ENCODE measurements at regions of chr4 and their contacts with region 1.

Region 1: GRCh38 chr4:158805619-158806471 is 37.0 kb downstream of the FNIP2 start:
- DNase-seq: no peak
- H3K4me3 Mint-ChIP-seq: no peak overlapping the region
- H3K27ac Mint-ChIP-seq: no peak overlapping the region
- H3K4me1 Mint-ChIP-seq: peaks cover 18% of the 10 kb centered on the region
- H3K27me3 Mint-ChIP-seq: no peaks in the 10 kb centered on the region
- CTCF ChIP-seq: no peak

Region 2: GRCh38 chr4:158738866-158739265 is 67.0 kb before region 1 on chr4:
- CTCF ChIA-PET with region 1: no interaction called
- POLR2A ChIA-PET with region 1: no interaction called
- intact Hi-C with region 1: no loop called
- DNase-seq: no peak
- H3K4me3 Mint-ChIP-seq: no peak overlapping the region
- H3K27ac Mint-ChIP-seq: no peak overlapping the region
- H3K4me1 Mint-ChIP-seq: no peaks in the 10 kb centered on the region
- H3K27me3 Mint-ChIP-seq: no peaks in the 10 kb centered on the region
- CTCF ChIP-seq: no peak

Region 3: GRCh38 chr4:158768555-158769174 is 37.2 kb before region 1 on chr4 and contains the start of gene FNIP2:
- CTCF ChIA-PET with region 1: no interaction called
- POLR2A ChIA-PET with region 1: interaction called, 12 read pairs
- intact Hi-C with region 1: no loop called
- DNase-seq: peak; percentile 69
- H3K4me3 Mint-ChIP-seq: peak within 1 kb of the TSS; percentile 94
- H3K27ac Mint-ChIP-seq: peak within 1 kb of the TSS; percentile 93
- H3K4me1 Mint-ChIP-seq: peaks cover 11% of the 10 kb centered on the region
- H3K27me3 Mint-ChIP-seq: no peaks in the 10 kb centered on the region
- CTCF ChIP-seq: no peak
- total RNA-seq, gene FNIP2: 6.4 and 9.3 TPM in 2 replicates